GM12878 (cell line): ENCODE measurements at regions of chr10 and their contacts with region 1.

Region 1: GRCh38 chr10:24318517-24318916 is 109.6 kb downstream of the KIAA1217 start:
- DNase-seq: no peak
- ATAC-seq: peak; percentile 43
- H3K4me3 ChIP-seq: no peak overlapping the region
- H3K27ac ChIP-seq: no peak overlapping the region
- H3K4me1 ChIP-seq: no peaks in the 10 kb centered on the region
- H3K27me3 ChIP-seq: no peaks in the 10 kb centered on the region
- CTCF ChIP-seq: no peak
- EP300 ChIP-seq: no peak
- POLR2A ChIP-seq: no peak
- RAD21 ChIP-seq: no peak

Region 2: DNA sequence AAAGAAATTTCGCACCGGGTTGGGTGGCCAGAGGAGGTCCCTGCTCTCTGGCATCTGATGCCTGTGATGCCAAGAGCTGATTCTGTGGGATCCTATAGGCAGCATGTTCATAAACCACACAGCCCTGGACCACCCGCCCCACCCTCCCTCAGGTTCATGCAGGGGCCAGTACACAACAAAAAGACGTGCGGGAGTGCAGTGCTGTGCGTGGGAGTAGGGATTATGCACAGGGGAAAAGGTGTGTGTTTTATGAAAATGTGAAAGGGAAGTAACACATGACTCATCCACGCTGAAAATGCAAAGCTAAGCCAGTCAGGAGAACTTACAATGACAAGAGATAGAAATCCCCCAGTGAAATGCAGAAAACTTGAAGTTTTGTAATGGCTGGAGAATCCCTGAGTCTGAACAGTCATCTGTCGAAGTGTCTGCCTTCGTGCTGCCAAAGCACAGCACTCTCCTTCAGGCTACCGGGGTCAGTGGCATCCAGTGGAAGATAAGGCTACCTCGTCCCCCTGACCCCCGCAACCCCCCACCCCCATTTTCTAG is 108.5 kb before region 1 on chr10:
- CTCF ChIA-PET with region 1: interaction called, 12 read pairs
- POLR2A ChIA-PET with region 1: interaction called, 3 read pairs
- RAD21 ChIA-PET with region 1: no interaction called
- SMC1A ChIA-PET with region 1: interaction called, 3 read pairs
- in situ Hi-C with region 1: no loop called
- intact Hi-C with region 1: no loop called
- DNase-seq: peak; percentile 82
- ATAC-seq: peak; percentile 75
- H3K4me3 ChIP-seq: peak overlapping the region; percentile 62
- H3K27ac ChIP-seq: peak overlapping the region; percentile 62
- H3K4me1 ChIP-seq: peaks cover 9% of the 10 kb centered on the region
- H3K27me3 ChIP-seq: no peaks in the 10 kb centered on the region
- CTCF ChIP-seq: no peak
- EP300 ChIP-seq: peak; percentile 74 to 87; a peak in 2 of 4 replicates
- POLR2A ChIP-seq: no peak
- RAD21 ChIP-seq: no peak

Region 3: DNA sequence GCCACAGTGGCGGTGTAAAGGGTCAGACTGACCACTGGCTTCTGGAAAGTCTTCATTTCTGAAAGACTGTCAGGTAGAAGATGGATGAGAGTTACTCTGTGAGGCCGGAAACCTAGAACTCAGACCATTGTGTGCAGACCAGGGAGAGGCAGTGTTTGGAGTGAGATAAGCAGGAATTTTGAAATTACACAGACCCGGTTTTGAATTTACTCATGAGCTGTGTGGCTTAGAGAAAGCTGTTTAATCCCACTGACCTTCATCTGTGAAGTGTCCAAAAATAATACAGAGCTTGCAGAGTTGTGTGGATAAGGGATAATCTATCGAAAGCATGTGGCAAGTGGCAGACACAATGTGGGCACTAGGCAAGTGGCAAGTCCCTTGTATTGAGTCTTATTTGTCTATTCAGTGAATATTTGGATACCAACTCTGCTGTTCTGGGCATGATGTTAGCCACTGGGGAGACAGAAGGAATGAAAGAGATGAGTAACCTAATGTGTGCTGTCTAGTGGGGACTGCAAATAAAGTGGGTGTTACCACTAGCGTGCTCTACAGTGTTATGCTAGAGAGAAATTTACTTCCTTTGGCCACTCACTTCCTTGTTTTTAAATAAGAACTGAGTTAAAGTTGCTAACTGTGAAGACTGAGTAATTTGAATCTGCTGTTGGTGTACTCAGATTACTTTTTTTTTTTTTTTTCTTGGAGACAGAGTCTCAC is 40.2 kb before region 1 on chr10:
- CTCF ChIA-PET with region 1: no interaction called
- POLR2A ChIA-PET with region 1: no interaction called
- RAD21 ChIA-PET with region 1: no interaction called
- SMC1A ChIA-PET with region 1: no interaction called
- in situ Hi-C with region 1: no loop called
- intact Hi-C with region 1: no loop called
- DNase-seq: no peak
- ATAC-seq: peak; percentile 42; the same call in 2 of the 3 replicates
- H3K4me3 ChIP-seq: no peak overlapping the region
- H3K27ac ChIP-seq: no peak overlapping the region
- H3K4me1 ChIP-seq: no peaks in the 10 kb centered on the region; the same call in 1 of the 2 replicates
- H3K27me3 ChIP-seq: no peaks in the 10 kb centered on the region
- CTCF ChIP-seq: no peak
- EP300 ChIP-seq: no peak
- POLR2A ChIP-seq: no peak
- RAD21 ChIP-seq: no peak

Region 4: GRCh38 chr10:24307696-24308485 is 10.6 kb before region 1 on chr10:
- CTCF ChIA-PET with region 1: interaction called, 19 read pairs
- POLR2A ChIA-PET with region 1: interaction called, 3 read pairs
- RAD21 ChIA-PET with region 1: interaction called, 3 read pairs
- SMC1A ChIA-PET with region 1: interaction called, 3 read pairs
- in situ Hi-C with region 1: no loop called
- intact Hi-C with region 1: no loop called
- DNase-seq: no peak
- ATAC-seq: no peak
- H3K4me3 ChIP-seq: no peak overlapping the region
- H3K27ac ChIP-seq: no peak overlapping the region
- H3K4me1 ChIP-seq: no peaks in the 10 kb centered on the region
- H3K27me3 ChIP-seq: no peaks in the 10 kb centered on the region
- CTCF ChIP-seq: no peak
- EP300 ChIP-seq: no peak
- POLR2A ChIP-seq: no peak
- RAD21 ChIP-seq: no peak

Region 5: GRCh38 chr10:24370877-24371795 is 52.6 kb after region 1 on chr10:
- CTCF ChIA-PET with region 1: no interaction called
- POLR2A ChIA-PET with region 1: no interaction called
- RAD21 ChIA-PET with region 1: no interaction called
- SMC1A ChIA-PET with region 1: no interaction called
- in situ Hi-C with region 1: no loop called
- intact Hi-C with region 1: no loop called
- DNase-seq: no peak
- ATAC-seq: no peak
- H3K4me3 ChIP-seq: no peak overlapping the region
- H3K27ac ChIP-seq: no peak overlapping the region
- H3K4me1 ChIP-seq: no peaks in the 10 kb centered on the region
- H3K27me3 ChIP-seq: no peaks in the 10 kb centered on the region
- CTCF ChIP-seq: no peak
- EP300 ChIP-seq: no peak
- POLR2A ChIP-seq: no peak
- RAD21 ChIP-seq: no peak

Region 6: DNA sequence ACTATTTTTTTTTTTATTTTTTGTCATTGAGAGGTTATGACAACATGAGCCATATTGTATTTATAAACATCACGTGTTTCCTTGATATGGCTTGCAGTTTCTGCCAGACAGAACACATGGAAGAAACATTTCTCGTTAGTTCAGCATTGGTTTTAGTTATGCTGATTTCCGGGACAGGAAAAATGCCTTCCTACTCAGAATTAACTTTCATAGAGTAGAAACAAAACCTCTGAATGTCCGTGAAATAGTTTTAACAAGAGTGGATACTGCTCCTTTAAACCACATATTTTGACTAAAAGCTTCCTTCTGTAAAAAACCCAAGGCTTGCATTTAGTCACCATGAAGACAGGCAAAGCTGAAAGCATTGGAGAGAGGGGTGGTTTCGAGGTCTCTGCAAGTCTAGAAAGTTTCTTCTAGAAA is 130.8 kb after region 1 on chr10:
- CTCF ChIA-PET with region 1: no interaction called
- POLR2A ChIA-PET with region 1: no interaction called
- RAD21 ChIA-PET with region 1: no interaction called
- SMC1A ChIA-PET with region 1: no interaction called
- in situ Hi-C with region 1: no loop called
- intact Hi-C with region 1: no loop called
- DNase-seq: no peak
- ATAC-seq: peak; percentile 82
- H3K4me3 ChIP-seq: no peak overlapping the region
- H3K27ac ChIP-seq: no peak overlapping the region
- H3K4me1 ChIP-seq: peaks cover 8% of the 10 kb centered on the region; the same call in 1 of the 2 replicates
- H3K27me3 ChIP-seq: no peaks in the 10 kb centered on the region
- CTCF ChIP-seq: no peak
- EP300 ChIP-seq: no peak
- POLR2A ChIP-seq: no peak
- RAD21 ChIP-seq: no peak

Region 7: GRCh38 chr10:25336330-25336729 is 1017.8 kb after region 1 on chr10:
- CTCF ChIA-PET with region 1: no interaction called
- POLR2A ChIA-PET with region 1: no interaction called
- RAD21 ChIA-PET with region 1: no interaction called
- SMC1A ChIA-PET with region 1: no interaction called
- in situ Hi-C with region 1: no loop called
- intact Hi-C with region 1: no loop called
- DNase-seq: no peak
- ATAC-seq: no peak
- H3K4me3 ChIP-seq: no peak overlapping the region
- H3K27ac ChIP-seq: no peak overlapping the region
- H3K4me1 ChIP-seq: no peaks in the 10 kb centered on the region
- H3K27me3 ChIP-seq: no peaks in the 10 kb centered on the region
- CTCF ChIP-seq: no peak
- EP300 ChIP-seq: no peak
- POLR2A ChIP-seq: no peak
- RAD21 ChIP-seq: no peak